B cell (primary cell): ENCODE measurements at regions of chr22 and their contacts with region 1.

Region 1: DNA sequence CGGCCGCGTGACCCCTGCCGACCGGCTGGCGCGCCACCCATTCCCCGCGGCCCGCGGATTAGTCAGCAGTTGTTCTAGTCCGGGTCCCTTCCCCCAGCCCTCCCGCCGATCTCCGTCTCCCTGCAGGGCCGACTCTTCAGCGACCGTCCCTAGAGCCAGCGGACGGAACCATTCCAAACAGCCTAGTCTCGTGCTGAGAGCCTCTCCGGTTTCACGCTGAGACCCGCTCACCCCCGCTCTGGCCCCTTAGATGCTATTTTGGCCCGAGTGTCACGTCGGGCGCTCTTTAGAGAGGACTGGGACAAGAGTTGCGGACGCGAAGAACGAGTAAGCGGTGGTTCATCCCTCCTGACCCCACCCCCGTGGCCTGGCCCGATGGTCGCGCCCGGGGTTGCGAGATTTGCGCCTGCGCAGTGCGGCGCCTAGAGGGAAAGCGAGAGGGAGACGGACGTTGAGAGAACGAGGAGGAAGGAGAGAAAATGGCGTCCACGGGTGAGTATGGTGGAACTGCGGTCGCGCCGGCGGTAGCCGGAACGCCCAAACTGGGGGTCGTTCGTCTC is at the starts of genes EWSR1 and RHBDD3:
- DNase-seq: peak; percentile 99
- ATAC-seq: peak; percentile 86
- H3K4me3 ChIP-seq: peak within 1 kb of the TSS; percentile 61 to 96 (median 80)
- H3K4me3 Mint-ChIP-seq: peak within 1 kb of the TSS; percentile 93
- H3K27ac ChIP-seq: peak within 1 kb of the TSS; percentile 98 to 99
- H3K27ac Mint-ChIP-seq: peak within 1 kb of the TSS; percentile 96
- H3K4me1 ChIP-seq: peaks cover 42 to 47% of the 10 kb centered on the region in 2 donors
- H3K4me1 Mint-ChIP-seq: peaks cover 50% of the 10 kb centered on the region
- H3K27me3 ChIP-seq: no peaks in the 10 kb centered on the region
- H3K27me3 Mint-ChIP-seq: no peaks in the 10 kb centered on the region
- CTCF ChIP-seq: no peak
- total RNA-seq, gene EWSR1: 289 and 295 TPM in 2 replicates
- total RNA-seq, gene RHBDD3: 11.4 and 11.9 TPM in 2 replicates

Region 2: GRCh38 chr22:29251981-29252911 is 15.7 kb before region 1 on chr22:
- CTCF ChIA-PET with region 1: no interaction called
- POLR2A ChIA-PET with region 1: no interaction called
- intact Hi-C with region 1: no loop called
- DNase-seq: no peak
- ATAC-seq: no peak
- H3K4me3 ChIP-seq: no peak overlapping the region
- H3K4me3 Mint-ChIP-seq: no peak overlapping the region
- H3K27ac ChIP-seq: no peak overlapping the region
- H3K27ac Mint-ChIP-seq: no peak overlapping the region
- H3K4me1 ChIP-seq: no peaks in the 10 kb centered on the region
- H3K4me1 Mint-ChIP-seq: no peaks in the 10 kb centered on the region
- H3K27me3 ChIP-seq: peaks cover 0 to 12% (median 0%) of the 10 kb centered on the region in 4 experiments
- H3K27me3 Mint-ChIP-seq: peaks cover 5% of the 10 kb centered on the region
- CTCF ChIP-seq: no peak

Region 3: GRCh38 chr22:29757096-29757495 is 489.2 kb after region 1 on chr22:
- CTCF ChIA-PET with region 1: no interaction called
- POLR2A ChIA-PET with region 1: interaction called, 11 read pairs
- intact Hi-C with region 1: no loop called
- DNase-seq: no peak
- ATAC-seq: no peak
- H3K4me3 ChIP-seq: no peak overlapping the region
- H3K4me3 Mint-ChIP-seq: no peak overlapping the region
- H3K27ac ChIP-seq: no peak overlapping the region
- H3K27ac Mint-ChIP-seq: no peak overlapping the region
- H3K4me1 ChIP-seq: no peaks in the 10 kb centered on the region
- H3K4me1 Mint-ChIP-seq: peaks cover 6% of the 10 kb centered on the region
- H3K27me3 ChIP-seq: no peaks in the 10 kb centered on the region
- H3K27me3 Mint-ChIP-seq: no peaks in the 10 kb centered on the region
- CTCF ChIP-seq: no peak

Region 4: GRCh38 chr22:29766632-29767170 is 498.8 kb after region 1 on chr22 and contains the start of gene ZMAT5:
- CTCF ChIA-PET with region 1: no interaction called
- POLR2A ChIA-PET with region 1: no interaction called
- intact Hi-C with region 1: loop called (anchors 5 kb)
- DNase-seq: peak; percentile 95
- ATAC-seq: peak; percentile 97
- H3K4me3 ChIP-seq: peak within 1 kb of the TSS; percentile 73 to 99 (median 87)
- H3K4me3 Mint-ChIP-seq: peak within 1 kb of the TSS; percentile 99
- H3K27ac ChIP-seq: peak within 1 kb of the TSS; percentile 46 to 80
- H3K27ac Mint-ChIP-seq: peak within 1 kb of the TSS; percentile 95
- H3K4me1 ChIP-seq: peaks cover 17 to 20% of the 10 kb centered on the region in 2 donors
- H3K4me1 Mint-ChIP-seq: peaks cover 36% of the 10 kb centered on the region
- H3K27me3 ChIP-seq: no peaks in the 10 kb centered on the region
- H3K27me3 Mint-ChIP-seq: no peaks in the 10 kb centered on the region
- CTCF ChIP-seq: no peak
- total RNA-seq, gene ZMAT5: 16.5 and 17.8 TPM in 2 replicates

Region 5: DNA sequence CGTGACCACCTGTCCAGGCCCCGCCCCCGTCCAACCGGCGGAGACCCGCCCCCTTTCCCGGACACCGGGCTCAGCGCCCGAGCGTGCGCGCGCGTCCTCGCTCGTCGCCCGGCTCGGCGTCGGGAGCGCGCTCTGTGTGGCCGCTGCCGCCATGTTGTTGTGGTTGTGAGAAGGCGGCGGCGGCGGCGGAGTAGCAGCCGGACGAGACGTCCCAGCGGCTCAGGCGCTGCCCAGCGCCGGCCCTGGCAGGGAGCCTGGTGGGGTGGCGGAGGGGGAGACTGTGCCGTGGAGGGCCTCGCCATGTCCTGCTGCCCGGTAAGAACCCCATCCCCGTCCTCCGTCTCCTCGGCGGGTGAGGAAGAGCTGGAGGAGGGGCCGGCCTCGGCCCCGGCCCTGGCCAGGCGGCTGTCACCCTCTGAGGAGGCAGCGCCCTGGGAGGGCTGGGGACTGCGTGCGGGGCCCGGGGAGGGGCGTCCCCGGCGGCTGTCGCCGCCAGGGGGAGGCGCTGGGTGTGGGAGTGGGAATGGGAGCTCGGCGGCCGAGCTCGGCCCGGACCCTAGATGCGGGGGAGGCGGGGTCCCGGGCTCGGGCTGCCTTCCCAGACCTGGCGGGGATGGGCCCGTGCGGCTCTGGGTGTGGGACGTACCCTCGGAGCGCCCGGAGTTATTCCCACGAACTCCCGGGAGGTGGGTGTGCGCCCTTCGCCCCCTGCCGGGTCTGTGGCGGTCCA is 615.3 kb after region 1 on chr22 and contains the start of gene MTMR3:
- CTCF ChIA-PET with region 1: no interaction called
- POLR2A ChIA-PET with region 1: no interaction called
- intact Hi-C with region 1: loop called (anchors 5 kb)
- DNase-seq: peak; percentile 94
- ATAC-seq: peak; percentile 80
- H3K4me3 ChIP-seq: peak within 1 kb of the TSS; percentile 76 to 99 (median 87)
- H3K4me3 Mint-ChIP-seq: peak within 1 kb of the TSS; percentile 92
- H3K27ac ChIP-seq: peak within 1 kb of the TSS; percentile 71 to 91
- H3K27ac Mint-ChIP-seq: peak within 1 kb of the TSS; percentile 86
- H3K4me1 ChIP-seq: peaks cover 21% of the 10 kb centered on the region in 2 donors
- H3K4me1 Mint-ChIP-seq: peaks cover 12% of the 10 kb centered on the region
- H3K27me3 ChIP-seq: no peaks in the 10 kb centered on the region
- H3K27me3 Mint-ChIP-seq: no peaks in the 10 kb centered on the region
- CTCF ChIP-seq: peak; percentile 47
- total RNA-seq, gene MTMR3: 67.8 and 76.5 TPM in 2 replicates